ENCODE measurements at regions of chr5 and their contacts with region 1.

Region 1: GRCh38 chr5:115586601-115587048 is 15.7 kb downstream of the TICAM2 start:
- DNase-seq: no peak
- H3K4me3 ChIP-seq: no peak overlapping the region
- H3K27ac ChIP-seq: no peak overlapping the region
- H3K4me1 ChIP-seq: peaks cover 43% of the 10 kb centered on the region
- H3K27me3 ChIP-seq: no peaks in the 10 kb centered on the region
- CTCF ChIP-seq: peak; percentile 72

Region 2: DNA sequence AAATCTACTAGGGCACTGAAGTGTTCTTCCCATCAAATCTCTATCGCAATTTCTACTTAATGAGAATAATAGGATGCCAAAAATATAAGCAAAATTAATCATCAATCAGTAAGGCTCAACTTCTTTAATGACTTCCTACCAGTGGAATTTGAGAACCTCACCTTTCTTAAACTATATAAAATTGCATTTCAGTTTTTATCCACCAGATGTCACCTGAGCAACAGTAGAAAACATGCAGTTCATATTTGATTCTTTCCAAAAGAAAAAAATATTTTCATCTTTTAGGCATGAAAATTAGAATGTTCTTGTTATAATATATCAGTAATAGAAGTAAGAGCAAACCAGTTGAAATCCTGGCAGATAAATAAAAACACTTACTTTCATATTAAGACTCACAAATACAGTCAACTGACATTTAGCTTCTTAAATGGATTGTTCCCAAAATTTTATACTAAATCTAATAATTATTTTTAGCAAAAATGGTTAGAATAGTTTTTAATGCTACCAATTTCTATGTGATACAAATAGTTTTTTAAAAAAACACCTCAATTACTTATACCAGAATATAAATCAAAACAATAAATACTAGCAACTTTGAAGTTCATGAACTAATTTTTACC is 276.8 kb before region 1 on chr5:
- intact Hi-C with region 1: loop called (anchors 2 kb)
- DNase-seq: no peak
- H3K4me3 ChIP-seq: no peak overlapping the region
- H3K27ac ChIP-seq: no peak overlapping the region
- H3K4me1 ChIP-seq: no peaks in the 10 kb centered on the region
- H3K27me3 ChIP-seq: no peaks in the 10 kb centered on the region
- CTCF ChIP-seq: peak; percentile 81

Region 3: GRCh38 chr5:115530426-115530825 is 56.2 kb before region 1 on chr5:
- intact Hi-C with region 1: no loop called
- DNase-seq: no peak
- H3K4me3 ChIP-seq: peak overlapping the region; percentile 13
- H3K27ac ChIP-seq: no peak overlapping the region
- H3K4me1 ChIP-seq: peaks cover 97% of the 10 kb centered on the region
- H3K27me3 ChIP-seq: no peaks in the 10 kb centered on the region
- CTCF ChIP-seq: no peak